HCT116 (cell line): ENCODE measurements at regions of chr16 and their contacts with region 1.

Region 1: GRCh38 chr16:3570420-3571062 is 6.7 kb downstream of the NLRC3 start:
- DNase-seq: peak; percentile 4
- ATAC-seq: peak; percentile 63
- H3K4me3 ChIP-seq: no peak overlapping the region
- H3K27ac ChIP-seq: no peak overlapping the region
- H3K4me1 ChIP-seq: peaks cover 0 to 6% of the 10 kb centered on the region in 2 experiments; a peak in 1 of 4 replicates
- H3K27me3 ChIP-seq: no peaks in the 10 kb centered on the region
- CTCF ChIP-seq: no peak
- POLR2A ChIP-seq: no peak
- RAD21 ChIP-seq: no peak

Region 2: DNA sequence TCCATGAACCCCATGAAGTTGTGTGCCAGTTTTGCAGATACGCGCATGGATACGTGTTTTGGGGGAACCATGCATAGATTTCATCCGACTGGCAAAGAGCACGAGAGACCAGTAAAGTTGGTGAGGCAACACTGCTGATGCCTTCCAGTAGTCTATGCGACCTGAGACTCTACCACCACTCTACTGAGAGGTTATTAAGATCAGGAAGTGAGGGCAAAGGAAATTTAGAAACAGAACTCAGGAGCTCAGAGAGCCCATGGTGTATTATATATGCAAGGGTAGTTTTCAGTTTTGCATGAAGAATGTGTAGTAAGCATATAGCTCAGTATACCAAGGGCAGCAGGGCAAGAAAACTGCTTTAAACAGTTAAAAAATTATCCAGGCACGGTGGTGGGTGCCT is 36.6 kb after region 1 on chr16:
- CTCF ChIA-PET with region 1: no interaction called
- POLR2A ChIA-PET with region 1: no interaction called
- RAD21 ChIA-PET with region 1: interaction called in 1 of 2 experiments, 10 read pairs
- intact Hi-C with region 1: no loop called
- DNase-seq: no peak
- ATAC-seq: no peak
- H3K4me3 ChIP-seq: no peak overlapping the region
- H3K27ac ChIP-seq: no peak overlapping the region
- H3K4me1 ChIP-seq: peaks cover 0 to 7% of the 10 kb centered on the region in 2 experiments; a peak in 2 of 4 replicates
- H3K27me3 ChIP-seq: no peaks in the 10 kb centered on the region
- CTCF ChIP-seq: no peak
- POLR2A ChIP-seq: no peak
- RAD21 ChIP-seq: no peak